ENCODE measurements at regions of chr2 and their contacts with region 1.

Region 1: GRCh38 chr2:68909793-68910674 is 38.8 kb upstream of the BMP10 start:
- DNase-seq: peak in 3 of 4 donors; percentile 46 to 74 (median 59)
- ATAC-seq: peak; percentile 78
- H3K4me3 ChIP-seq: no peak overlapping the region
- H3K27ac ChIP-seq: no peak overlapping the region
- H3K4me1 ChIP-seq: peaks cover 10 to 29% of the 10 kb centered on the region in 2 donors
- H3K27me3 ChIP-seq: no peaks in the 10 kb centered on the region
- CTCF ChIP-seq: peak; percentile 78 to 87

Region 2: DNA sequence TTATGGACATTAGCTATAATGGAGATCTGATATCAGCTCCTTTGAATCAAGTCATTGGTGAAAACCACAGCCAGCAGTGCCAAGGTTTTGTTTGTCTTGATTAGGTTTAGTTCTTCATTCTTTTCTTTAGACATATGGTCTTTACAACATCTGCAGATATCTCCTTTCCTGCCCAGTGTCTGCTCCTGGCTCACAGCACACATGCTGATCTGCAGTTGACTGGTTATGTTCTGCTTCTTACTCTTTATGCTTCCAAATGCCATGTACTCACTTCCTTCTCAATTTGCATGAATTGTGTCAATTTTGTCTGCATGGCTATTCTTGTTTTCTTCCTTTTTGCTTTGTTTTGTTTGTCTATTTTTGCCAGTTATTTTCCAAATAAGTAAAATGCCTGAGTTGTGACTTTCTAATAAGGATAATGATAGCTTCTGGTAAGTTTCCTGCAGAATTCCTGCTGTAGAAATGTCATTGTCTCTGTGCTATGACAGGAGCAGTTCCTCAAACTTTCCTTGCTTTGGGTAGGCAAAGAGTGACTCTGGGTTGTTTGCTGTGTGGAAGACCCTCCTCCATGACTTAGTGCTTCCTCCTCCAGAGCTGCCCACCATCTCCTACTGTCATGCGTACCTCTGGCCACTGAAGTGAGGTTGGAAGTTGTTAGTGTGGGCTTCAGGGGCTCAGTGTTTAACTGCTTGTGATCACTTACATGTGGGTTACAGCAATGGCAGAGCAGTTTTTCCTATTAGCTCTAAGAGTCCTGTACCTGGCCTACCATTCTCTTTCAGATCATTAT is 167.2 kb before region 1 on chr2:
- intact Hi-C with region 1: loop called in 1 of 2 experiments (anchors 10 kb)
- DNase-seq: no peak
- ATAC-seq: peak; percentile 26
- H3K4me3 ChIP-seq: peak overlapping the region in 1 of 2 donors; percentile 1
- H3K27ac ChIP-seq: peak overlapping the region; percentile 37 to 85
- H3K4me1 ChIP-seq: peaks cover 11 to 93% of the 10 kb centered on the region in 2 donors
- H3K27me3 ChIP-seq: no peaks in the 10 kb centered on the region
- CTCF ChIP-seq: no peak

Region 3: GRCh38 chr2:68832233-68832869 is 77.7 kb before region 1 on chr2:
- intact Hi-C with region 1: loop called in 1 of 2 experiments (anchors 5 kb)
- DNase-seq: peak in 2 of 4 donors; percentile 33 to 85
- ATAC-seq: peak; percentile 70
- H3K4me3 ChIP-seq: no peak overlapping the region
- H3K27ac ChIP-seq: peak overlapping the region; percentile 72 to 90
- H3K4me1 ChIP-seq: peaks cover 18 to 95% of the 10 kb centered on the region in 2 donors
- H3K27me3 ChIP-seq: no peaks in the 10 kb centered on the region
- CTCF ChIP-seq: no peak